ENCODE measurements at regions of chr14 and their contacts with region 1.

Region 1: GRCh38 chr14:68020999-68021663 is 201.6 kb downstream of the RAD51B start:
- DNase-seq: no peak
- H3K4me3 ChIP-seq: no peak overlapping the region
- H3K27ac ChIP-seq: no peak overlapping the region
- H3K4me1 ChIP-seq: no peaks in the 10 kb centered on the region
- H3K27me3 ChIP-seq: no peaks in the 10 kb centered on the region
- CTCF ChIP-seq: no peak

Region 2: DNA sequence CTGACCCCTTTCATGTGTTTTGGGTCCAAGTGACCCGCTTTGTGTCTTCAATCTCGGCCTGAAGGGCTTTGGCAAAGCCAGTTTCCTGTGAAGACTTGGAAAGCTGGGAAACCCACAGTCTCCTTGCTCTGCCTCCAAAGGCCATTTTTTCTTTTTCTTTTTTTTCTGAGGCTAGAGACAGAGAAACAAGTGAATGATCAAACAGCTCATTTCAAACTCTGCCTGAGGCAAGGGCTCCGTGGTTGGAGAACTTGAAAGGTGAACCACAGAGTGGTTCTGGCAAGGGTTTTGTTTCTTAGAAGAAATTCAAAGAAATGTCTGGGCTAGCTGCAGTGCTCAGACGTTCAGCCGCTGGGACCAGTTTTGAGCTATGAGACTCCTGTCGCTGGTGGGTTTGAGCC is 1314.2 kb after region 1 on chr14:
- CTCF ChIA-PET with region 1: interaction called, 11 read pairs
- POLR2A ChIA-PET with region 1: no interaction called
- intact Hi-C with region 1: no loop called
- DNase-seq: peak; percentile 63 to 78
- H3K4me3 ChIP-seq: no peak overlapping the region
- H3K27ac ChIP-seq: no peak overlapping the region
- H3K4me1 ChIP-seq: peaks cover 10% of the 10 kb centered on the region
- H3K27me3 ChIP-seq: peaks cover 26% of the 10 kb centered on the region; the same call in 1 of the 2 replicates
- CTCF ChIP-seq: no peak

Measured in PC-9 (cell line).